GM12878 (cell line): ENCODE measurements at regions of chr1 and their contacts with region 1.

Region 1: GRCh38 chr1:94335950-94336349 is 82.2 kb upstream of the ABCD3 start:
- DNase-seq: no peak
- ATAC-seq: peak; percentile 69
- H3K4me3 ChIP-seq: no peak overlapping the region
- H3K27ac ChIP-seq: no peak overlapping the region; the same call in 1 of the 2 replicates
- H3K4me1 ChIP-seq: peaks cover 23% of the 10 kb centered on the region
- H3K27me3 ChIP-seq: no peaks in the 10 kb centered on the region
- CTCF ChIP-seq: peak; percentile 61 to 82 (median 81)
- EP300 ChIP-seq: no peak
- POLR2A ChIP-seq: no peak
- RAD21 ChIP-seq: peak; percentile 93

Region 2: GRCh38 chr1:94039514-94039870 is 296.5 kb before region 1 on chr1:
- CTCF ChIA-PET with region 1: interaction called, 119 read pairs
- POLR2A ChIA-PET with region 1: interaction called, 4 read pairs
- RAD21 ChIA-PET with region 1: interaction called, 21 read pairs
- SMC1A ChIA-PET with region 1: interaction called, 21 read pairs
- in situ Hi-C with region 1: no loop called
- intact Hi-C with region 1: no loop called
- DNase-seq: no peak
- ATAC-seq: peak; percentile 65
- H3K4me3 ChIP-seq: no peak overlapping the region
- H3K27ac ChIP-seq: no peak overlapping the region
- H3K4me1 ChIP-seq: peaks cover 6% of the 10 kb centered on the region; the same call in 1 of the 2 replicates
- H3K27me3 ChIP-seq: no peaks in the 10 kb centered on the region; a peak in 1 of 4 replicates
- CTCF ChIP-seq: peak; percentile 78 to 92 (median 86)
- EP300 ChIP-seq: no peak
- POLR2A ChIP-seq: no peak
- RAD21 ChIP-seq: peak; percentile 53

Region 3: GRCh38 chr1:94045465-94046056 is 290.4 kb before region 1 on chr1:
- CTCF ChIA-PET with region 1: interaction called, 119 read pairs
- POLR2A ChIA-PET with region 1: no interaction called
- RAD21 ChIA-PET with region 1: interaction called, 21 read pairs
- SMC1A ChIA-PET with region 1: interaction called, 21 read pairs
- in situ Hi-C with region 1: no loop called
- intact Hi-C with region 1: no loop called
- DNase-seq: no peak
- ATAC-seq: peak; percentile 73
- H3K4me3 ChIP-seq: no peak overlapping the region
- H3K27ac ChIP-seq: no peak overlapping the region
- H3K4me1 ChIP-seq: no peaks in the 10 kb centered on the region
- H3K27me3 ChIP-seq: no peaks in the 10 kb centered on the region; a peak in 1 of 4 replicates
- CTCF ChIP-seq: peak; percentile 33 to 65 (median 45)
- EP300 ChIP-seq: no peak
- POLR2A ChIP-seq: no peak
- RAD21 ChIP-seq: peak; percentile 45